IMR-90 (cell line): ENCODE measurements at regions of chr3 and their contacts with region 1.

Region 1: GRCh38 chr3:153246806-153247205 is 84.8 kb downstream of the RAP2B start:
- DNase-seq: peak; percentile 89
- ATAC-seq: peak; percentile 77
- H3K4me3 ChIP-seq: no peak overlapping the region
- H3K27ac ChIP-seq: peak overlapping the region; percentile 20; the same call in 1 of the 2 replicates
- H3K4me1 ChIP-seq: peaks cover 7% of the 10 kb centered on the region
- H3K27me3 ChIP-seq: no peaks in the 10 kb centered on the region
- CTCF ChIP-seq: no peak
- POLR2A ChIP-seq: no peak
- RAD21 ChIP-seq: no peak

Region 2: GRCh38 chr3:152922554-152922953 is 324.3 kb before region 1 on chr3:
- CTCF ChIA-PET with region 1: no interaction called
- POLR2A ChIA-PET with region 1: no interaction called
- dilution Hi-C with region 1: no loop called
- in situ Hi-C with region 1: no loop called
- intact Hi-C with region 1: no loop called
- DNase-seq: no peak
- ATAC-seq: no peak
- H3K4me3 ChIP-seq: no peak overlapping the region
- H3K27ac ChIP-seq: no peak overlapping the region
- H3K4me1 ChIP-seq: no peaks in the 10 kb centered on the region
- H3K27me3 ChIP-seq: no peaks in the 10 kb centered on the region
- CTCF ChIP-seq: no peak
- POLR2A ChIP-seq: no peak
- RAD21 ChIP-seq: no peak

Region 3: DNA sequence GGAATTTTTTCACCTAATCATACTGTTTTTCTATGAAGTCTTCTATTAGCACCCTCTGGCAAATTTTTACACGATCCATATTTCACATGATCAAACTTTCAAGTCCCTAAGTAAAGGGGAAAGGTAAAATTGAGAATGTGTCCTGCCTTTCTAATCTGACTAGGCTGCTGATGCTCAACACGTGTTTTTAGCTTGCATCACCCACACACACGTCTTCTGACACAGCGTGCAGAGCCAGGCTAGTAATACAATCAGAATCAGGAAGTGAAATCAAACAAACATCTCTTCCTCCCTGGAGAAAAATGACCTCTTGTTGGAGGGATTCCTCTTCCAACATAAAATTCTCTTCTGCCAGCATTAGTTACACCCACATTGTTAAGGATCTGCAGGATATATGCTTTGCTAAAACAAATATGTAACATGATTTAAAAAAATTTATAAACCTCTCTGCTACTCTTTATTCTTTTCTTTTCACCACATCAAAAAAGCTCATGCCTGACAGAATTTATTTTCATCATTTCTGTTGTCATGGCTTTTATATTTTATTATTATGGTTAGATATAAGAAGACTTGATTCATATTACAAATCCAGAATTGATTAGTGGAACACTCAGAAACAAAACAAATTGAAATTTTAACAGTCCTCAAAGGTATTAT is 37.6 kb after region 1 on chr3:
- CTCF ChIA-PET with region 1: no interaction called
- POLR2A ChIA-PET with region 1: no interaction called
- dilution Hi-C with region 1: no loop called
- in situ Hi-C with region 1: no loop called
- intact Hi-C with region 1: loop called (anchors 5 kb)
- DNase-seq: peak; percentile 96
- ATAC-seq: peak; percentile 95
- H3K4me3 ChIP-seq: no peak overlapping the region
- H3K27ac ChIP-seq: peak overlapping the region; percentile 29; the same call in 1 of the 2 replicates
- H3K4me1 ChIP-seq: peaks cover 4% of the 10 kb centered on the region
- H3K27me3 ChIP-seq: no peaks in the 10 kb centered on the region
- CTCF ChIP-seq: no peak
- POLR2A ChIP-seq: no peak
- RAD21 ChIP-seq: no peak

Region 4: DNA sequence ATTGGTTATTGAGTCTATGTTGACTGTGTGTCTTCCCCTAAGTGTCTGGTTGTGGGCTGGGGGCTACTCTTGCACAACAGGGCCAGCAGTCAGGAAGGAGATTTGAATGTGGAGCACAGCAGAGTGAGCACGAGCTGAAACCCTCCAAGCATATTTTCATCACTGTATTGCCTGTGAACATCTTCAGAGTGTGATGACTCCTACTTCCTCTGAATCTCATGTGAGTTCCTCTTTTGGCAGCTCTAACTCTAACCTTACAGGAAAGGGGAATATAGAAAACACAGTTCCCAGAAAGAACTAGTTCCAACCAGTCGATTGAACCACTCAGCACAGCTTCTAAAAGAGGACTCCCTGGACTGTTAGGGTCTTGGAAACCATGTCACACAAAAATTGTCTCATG is 126.8 kb after region 1 on chr3:
- CTCF ChIA-PET with region 1: no interaction called
- POLR2A ChIA-PET with region 1: no interaction called
- dilution Hi-C with region 1: no loop called
- in situ Hi-C with region 1: no loop called
- intact Hi-C with region 1: no loop called
- DNase-seq: peak; percentile 17
- ATAC-seq: no peak
- H3K4me3 ChIP-seq: no peak overlapping the region
- H3K27ac ChIP-seq: no peak overlapping the region
- H3K4me1 ChIP-seq: no peaks in the 10 kb centered on the region
- H3K27me3 ChIP-seq: no peaks in the 10 kb centered on the region
- CTCF ChIP-seq: no peak
- POLR2A ChIP-seq: no peak
- RAD21 ChIP-seq: no peak